Gastrocnemius medialis (tissue), 4 donors: ENCODE measurements at regions of chr7 and their contacts with region 1.

Region 1: GRCh38 chr7:124784879-124785818 is 19.6 kb upstream of the GPR37 start:
- DNase-seq: no peak
- ATAC-seq: peak in 1 of 2 donors; percentile 78
- H3K4me3 ChIP-seq: no peak overlapping the region
- H3K27ac ChIP-seq: no peak overlapping the region
- H3K4me1 ChIP-seq: no peaks in the 10 kb centered on the region
- H3K27me3 ChIP-seq: no peaks in the 10 kb centered on the region
- CTCF ChIP-seq: peak in 2 of 5 experiments; percentile 43 to 55
- POLR2A ChIP-seq: no peak

Region 2: DNA sequence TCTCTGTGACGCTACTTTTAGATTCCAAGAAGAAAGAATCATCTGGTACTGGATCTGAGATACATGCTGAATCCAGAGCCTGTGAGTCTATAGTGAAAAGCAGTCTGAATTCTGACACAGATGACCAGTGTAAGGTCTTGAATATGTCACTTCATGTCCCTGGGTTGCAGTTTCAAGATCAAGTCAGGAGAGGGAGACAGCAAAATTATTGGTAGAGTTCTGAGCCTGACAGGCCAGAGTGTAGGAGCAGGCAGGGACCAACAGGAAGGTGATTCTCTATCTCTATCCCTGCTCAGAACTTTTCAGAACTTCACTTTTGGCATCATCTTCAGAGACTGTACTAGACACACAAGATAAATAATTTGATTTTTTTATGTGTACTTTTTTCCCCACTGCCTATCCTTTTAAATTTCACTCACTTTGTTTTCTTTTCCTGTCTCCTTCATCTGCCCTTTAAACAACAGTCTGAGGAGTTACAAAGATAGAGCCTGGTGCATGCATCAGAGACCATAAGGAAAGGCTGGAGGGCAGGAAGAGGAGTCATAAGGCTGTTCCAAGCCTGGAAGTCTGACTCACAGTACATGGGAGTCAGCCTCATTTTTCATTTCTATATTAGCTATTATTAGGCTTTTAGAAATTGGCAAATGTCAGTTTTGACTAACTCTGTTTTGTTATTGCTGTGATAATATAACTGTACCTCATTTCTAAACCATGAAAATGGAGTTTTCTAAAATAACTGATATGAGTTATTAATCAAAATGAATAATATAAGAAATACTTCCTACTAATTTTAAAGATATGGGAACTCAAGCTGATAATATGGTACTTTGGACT is 632.1 kb before region 1 on chr7:
- in situ Hi-C with region 1: loop called in 1 of 4 experiments (anchors 25 kb)
- intact Hi-C with region 1: loop called (anchors 10 kb)
- DNase-seq: no peak
- ATAC-seq: no peak
- H3K4me3 ChIP-seq: no peak overlapping the region
- H3K27ac ChIP-seq: no peak overlapping the region
- H3K4me1 ChIP-seq: no peaks in the 10 kb centered on the region
- H3K27me3 ChIP-seq: no peaks in the 10 kb centered on the region
- CTCF ChIP-seq: no peak
- POLR2A ChIP-seq: no peak